SK-N-SH (cell line): ENCODE measurements at regions of chr1 and their contacts with region 1.

Region 1: DNA sequence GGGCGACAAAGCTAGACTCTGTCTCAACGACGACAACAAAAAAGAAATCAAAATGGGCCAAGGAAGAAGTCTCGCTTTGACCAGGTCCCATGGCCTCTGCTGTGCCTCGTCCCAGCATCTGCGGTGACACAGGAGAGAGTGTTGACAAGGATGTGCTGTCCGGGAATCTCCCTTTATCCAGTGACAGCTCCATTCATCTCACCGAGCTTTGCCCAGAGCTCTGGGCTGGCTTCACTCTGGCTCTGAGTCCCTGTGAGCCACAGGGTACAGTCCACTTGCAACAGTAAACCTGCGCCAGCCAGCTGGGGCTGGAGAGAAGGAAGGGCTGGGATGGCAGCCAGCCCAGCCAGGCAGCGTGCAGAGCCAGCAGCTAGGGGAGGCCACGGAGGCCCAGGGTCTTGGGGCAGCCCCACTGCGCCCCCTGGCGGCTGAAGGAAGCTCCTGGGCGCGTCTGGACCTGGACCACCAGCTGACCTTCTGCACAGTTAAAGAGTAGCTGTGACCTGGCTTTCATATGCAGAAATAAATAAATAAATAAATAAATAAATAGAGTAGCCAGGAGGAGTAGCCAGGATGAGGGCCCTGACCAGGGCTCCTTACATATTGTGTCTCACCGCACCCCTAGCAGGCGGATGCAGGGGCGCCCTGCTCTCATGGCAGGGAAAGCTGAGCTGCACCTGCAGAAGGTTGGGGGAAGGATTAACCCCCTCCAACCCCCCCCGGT is 29.7 kb downstream of the ENO1 start:
- DNase-seq: peak; percentile 97
- H3K4me3 ChIP-seq: peak overlapping the region in 1 of 2 experiments; percentile 44; a peak in 1 of 4 replicates
- H3K27ac ChIP-seq: peak overlapping the region in 1 of 2 experiments; percentile 41; a peak in 2 of 4 replicates
- H3K4me1 ChIP-seq: peaks cover 5 to 28% of the 10 kb centered on the region in 2 experiments; a peak in 1 of 4 replicates
- H3K27me3 ChIP-seq: no peaks in the 10 kb centered on the region
- CTCF ChIP-seq: peak; percentile 78
- EP300 ChIP-seq: peak in 1 of 2 experiments; percentile 33; a peak in 1 of 4 replicates
- RAD21 ChIP-seq: peak; percentile 92

Region 2: GRCh38 chr1:8554956-8555534 is 293.8 kb before region 1 on chr1:
- CTCF ChIA-PET with region 1: interaction called, 10 read pairs
- POLR2A ChIA-PET with region 1: no interaction called
- DNase-seq: no peak
- H3K4me3 ChIP-seq: no peak overlapping the region
- H3K27ac ChIP-seq: peak overlapping the region; percentile 24 to 59; a peak in 2 of 4 replicates
- H3K4me1 ChIP-seq: peaks cover 0 to 2% of the 10 kb centered on the region in 2 experiments; a peak in 3 of 4 replicates
- H3K27me3 ChIP-seq: no peaks in the 10 kb centered on the region
- CTCF ChIP-seq: no peak
- EP300 ChIP-seq: no peak
- RAD21 ChIP-seq: no peak

Region 3: GRCh38 chr1:8598060-8598724 is 250.6 kb before region 1 on chr1:
- CTCF ChIA-PET with region 1: interaction called, 11 read pairs
- POLR2A ChIA-PET with region 1: no interaction called
- DNase-seq: peak; percentile 63
- H3K4me3 ChIP-seq: peak overlapping the region; percentile 14 to 35; a peak in 2 of 4 replicates
- H3K27ac ChIP-seq: peak overlapping the region; percentile 78 to 82
- H3K4me1 ChIP-seq: peaks cover 34 to 46% of the 10 kb centered on the region in 2 experiments; a peak in 3 of 4 replicates
- H3K27me3 ChIP-seq: no peaks in the 10 kb centered on the region
- CTCF ChIP-seq: peak; percentile 45
- EP300 ChIP-seq: no peak
- RAD21 ChIP-seq: peak; percentile 66

Region 4: GRCh38 chr1:8660411-8660828 is 188.4 kb before region 1 on chr1:
- CTCF ChIA-PET with region 1: no interaction called
- POLR2A ChIA-PET with region 1: no interaction called
- DNase-seq: peak; percentile 17
- H3K4me3 ChIP-seq: peak overlapping the region in 1 of 2 experiments; percentile 12; a peak in 1 of 4 replicates
- H3K27ac ChIP-seq: peak overlapping the region; percentile 71 to 96
- H3K4me1 ChIP-seq: peaks cover 27 to 46% of the 10 kb centered on the region in 2 experiments
- H3K27me3 ChIP-seq: no peaks in the 10 kb centered on the region
- CTCF ChIP-seq: no peak
- EP300 ChIP-seq: peak in 1 of 2 experiments; percentile 34; a peak in 1 of 4 replicates
- RAD21 ChIP-seq: 0 out of 2 replicates have a peak, but pooled peaks have one; percentile 3

Region 5: GRCh38 chr1:8702850-8703810 is 145.7 kb before region 1 on chr1:
- CTCF ChIA-PET with region 1: interaction called, 39 read pairs
- POLR2A ChIA-PET with region 1: interaction called, 9 read pairs
- DNase-seq: peak; percentile 96
- H3K4me3 ChIP-seq: peak overlapping the region; percentile 51 to 64
- H3K27ac ChIP-seq: peak overlapping the region; percentile 73 to 93
- H3K4me1 ChIP-seq: peaks cover 30 to 48% of the 10 kb centered on the region in 2 experiments; a peak in 3 of 4 replicates
- H3K27me3 ChIP-seq: no peaks in the 10 kb centered on the region
- CTCF ChIP-seq: no peak
- EP300 ChIP-seq: peak; percentile 32 to 89; a peak in 3 of 4 replicates
- RAD21 ChIP-seq: no peak; the same call in 1 of the 2 replicates

Region 6: DNA sequence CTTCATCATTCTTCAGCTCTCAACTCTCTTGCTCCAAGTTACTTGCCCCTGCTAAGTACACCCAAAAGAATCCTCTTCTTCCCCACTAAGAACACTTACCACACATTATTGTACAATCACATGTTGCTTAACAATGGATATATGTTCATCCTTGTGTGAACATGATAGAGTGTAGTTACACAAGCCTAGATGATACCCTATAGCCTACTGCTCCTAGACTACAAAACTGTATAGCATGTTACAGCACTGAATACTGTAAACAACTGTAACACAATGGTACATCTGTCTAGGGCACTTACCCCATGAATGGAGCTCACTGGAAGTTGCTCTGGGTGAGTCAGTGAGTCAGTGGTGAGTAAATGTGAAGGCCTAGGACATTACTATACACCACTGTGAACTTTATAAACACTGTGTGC is 108.8 kb before region 1 on chr1:
- CTCF ChIA-PET with region 1: interaction called, 10 read pairs
- POLR2A ChIA-PET with region 1: interaction called, 3 read pairs
- DNase-seq: no peak
- H3K4me3 ChIP-seq: no peak overlapping the region
- H3K27ac ChIP-seq: peak overlapping the region in 1 of 2 experiments; percentile 33; a peak in 1 of 4 replicates
- H3K4me1 ChIP-seq: peaks cover 2 to 5% of the 10 kb centered on the region in 2 experiments; a peak in 2 of 4 replicates
- H3K27me3 ChIP-seq: no peaks in the 10 kb centered on the region
- CTCF ChIP-seq: no peak
- EP300 ChIP-seq: no peak
- RAD21 ChIP-seq: no peak

Region 7: DNA sequence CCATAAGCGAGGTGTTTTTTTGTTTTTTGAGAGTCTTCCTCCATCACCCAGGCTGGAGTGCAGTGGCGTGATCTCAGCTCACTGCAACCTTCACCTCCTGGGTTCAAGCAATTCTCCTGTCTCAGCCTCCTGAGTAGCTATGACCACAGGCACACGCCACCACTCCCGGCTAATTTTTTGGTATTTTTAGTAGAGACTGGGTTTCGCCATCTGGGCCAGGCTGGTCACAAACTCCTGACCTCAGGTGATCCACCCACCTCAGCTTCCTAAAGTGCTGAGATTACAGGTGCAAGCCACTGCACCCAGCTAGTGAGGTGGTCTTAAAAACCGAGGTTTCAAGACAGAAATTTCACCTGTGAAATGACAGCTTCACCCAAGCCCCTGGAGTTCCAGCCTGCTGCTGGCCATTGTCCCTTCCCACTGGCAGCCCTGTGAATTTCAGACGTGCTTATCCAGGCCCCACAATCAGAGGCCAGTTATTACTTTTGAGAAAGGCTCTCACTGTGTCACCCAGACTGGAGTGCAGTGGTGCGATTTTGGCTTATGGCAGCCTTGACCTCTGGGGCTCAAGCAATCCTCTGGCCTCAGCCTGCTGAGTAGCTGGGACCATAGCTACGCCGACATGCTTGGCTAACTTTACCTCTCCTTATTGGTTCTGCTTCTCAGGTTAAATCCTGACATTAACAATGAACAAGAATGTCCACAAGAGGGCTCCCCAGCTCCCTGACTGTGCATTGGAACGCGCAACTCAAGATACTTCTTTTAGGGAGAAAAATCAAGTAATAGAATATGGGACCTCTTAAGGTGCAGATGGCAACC is 10.3 kb after region 1 on chr1:
- CTCF ChIA-PET with region 1: interaction called, 107 read pairs
- POLR2A ChIA-PET with region 1: interaction called, 3 read pairs
- DNase-seq: peak; percentile 53
- H3K4me3 ChIP-seq: no peak overlapping the region
- H3K27ac ChIP-seq: peak overlapping the region in 1 of 2 experiments; percentile 75; a peak in 3 of 4 replicates
- H3K4me1 ChIP-seq: no peaks in the 10 kb centered on the region; a peak in 1 of 4 replicates
- H3K27me3 ChIP-seq: no peaks in the 10 kb centered on the region
- CTCF ChIP-seq: peak; percentile 69
- EP300 ChIP-seq: no peak
- RAD21 ChIP-seq: peak; percentile 61

Region 8: DNA sequence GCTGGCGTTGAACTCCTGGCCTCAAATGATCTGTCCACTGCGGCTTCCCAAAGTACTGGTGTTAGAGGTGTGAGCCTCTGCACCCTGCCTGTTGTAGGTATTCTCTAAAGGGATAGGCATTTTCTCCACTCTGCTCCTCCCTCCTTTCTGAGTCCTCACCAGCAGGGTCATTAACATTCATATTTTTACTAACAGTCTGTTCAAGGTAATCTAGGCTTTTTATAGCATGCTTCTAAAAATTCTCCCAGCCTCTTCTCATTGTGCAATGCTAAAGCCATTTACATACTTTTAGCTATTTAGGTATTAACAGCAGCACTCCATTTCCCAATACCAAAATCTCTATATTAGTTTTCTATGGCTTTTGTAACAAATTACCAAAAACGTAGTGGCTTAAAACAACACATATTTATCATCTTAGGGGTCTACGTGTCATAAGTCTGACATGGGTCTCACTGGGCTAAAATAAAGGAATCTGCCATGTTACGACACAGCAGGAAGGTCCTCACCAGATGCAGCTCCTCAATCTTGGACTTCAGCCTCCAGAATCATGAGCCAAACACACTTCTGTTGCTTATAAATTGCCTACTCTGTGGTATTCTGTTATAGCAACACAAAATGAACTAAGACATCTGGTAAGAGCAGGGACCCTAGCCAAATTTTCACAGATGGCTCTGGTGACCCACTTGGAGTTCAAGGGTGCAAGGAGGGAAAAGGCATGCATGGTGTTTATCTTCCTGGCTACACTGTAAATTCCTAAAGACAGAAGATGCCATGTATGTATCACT is 180.3 kb after region 1 on chr1:
- CTCF ChIA-PET with region 1: no interaction called
- POLR2A ChIA-PET with region 1: no interaction called
- DNase-seq: no peak
- H3K4me3 ChIP-seq: no peak overlapping the region
- H3K27ac ChIP-seq: no peak overlapping the region
- H3K4me1 ChIP-seq: no peaks in the 10 kb centered on the region
- H3K27me3 ChIP-seq: no peaks in the 10 kb centered on the region
- CTCF ChIP-seq: no peak
- EP300 ChIP-seq: no peak
- RAD21 ChIP-seq: no peak